Posterior vena cava (tissue), 2 donors: ENCODE measurements at regions of chr14 and their contacts with region 1.

Region 1: DNA sequence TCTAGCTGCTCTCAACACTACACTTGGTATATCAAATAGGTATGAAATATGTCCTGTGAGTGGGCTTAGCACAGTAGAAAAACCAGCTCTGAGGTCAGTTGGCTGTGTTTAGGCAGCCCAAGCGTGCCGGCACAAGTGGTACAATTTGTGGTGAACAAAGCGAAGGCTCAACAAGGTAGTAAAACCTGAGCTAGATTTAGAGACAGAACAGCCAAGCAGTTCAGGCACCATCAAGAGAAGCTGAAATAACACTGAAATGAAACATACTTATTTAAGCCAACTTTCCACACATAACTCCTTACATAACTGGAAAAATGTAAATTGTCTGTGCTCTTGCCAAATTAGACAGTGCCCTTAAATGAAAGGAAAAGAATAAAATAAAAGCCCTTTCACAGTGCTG is 596.8 kb upstream of the FBXO33 start:
- DNase-seq: no peak

Region 2: DNA sequence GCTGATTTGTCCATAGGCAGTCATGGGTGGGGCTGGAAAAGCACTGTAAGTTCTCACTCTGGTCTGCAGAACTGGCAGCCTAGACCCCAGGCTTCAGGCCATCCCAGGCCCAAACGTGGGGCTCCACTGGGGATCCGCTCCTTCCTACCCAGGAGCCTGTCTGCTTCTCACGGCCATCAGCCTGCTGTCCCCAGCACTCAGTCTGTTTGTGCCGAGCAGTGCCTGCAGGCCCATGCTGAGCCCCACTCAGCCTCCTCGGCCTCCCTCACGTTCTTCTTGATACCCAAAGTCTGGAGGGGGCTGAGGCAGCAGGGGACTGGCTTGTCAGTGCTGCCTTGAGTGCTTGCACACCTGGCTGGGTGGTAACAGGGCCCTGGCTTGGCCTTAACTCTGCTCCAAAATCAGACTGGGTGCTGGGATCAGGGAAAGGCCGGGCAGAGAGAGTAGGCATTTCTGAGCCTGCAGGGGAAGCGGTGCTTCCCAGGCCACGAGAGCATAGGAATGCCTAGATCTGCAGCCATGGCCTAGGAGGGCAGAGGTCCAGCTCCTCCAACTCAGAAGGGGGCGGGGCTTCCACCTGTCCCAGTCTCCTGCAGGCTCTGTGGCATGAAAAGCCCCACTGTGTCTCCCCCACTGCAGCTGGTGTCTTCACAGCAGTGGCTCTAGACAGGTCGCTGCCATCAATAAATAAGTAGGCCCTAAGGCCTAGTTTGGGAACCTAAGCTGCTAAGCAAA is 175.6 kb after region 1 on chr14:
- intact Hi-C with region 1: loop called in 1 of 2 experiments (anchors 5 kb)
- DNase-seq: no peak